Mammary epithelial cell (primary cell): ENCODE measurements at regions of chr4 and their contacts with region 1.

Region 1: DNA sequence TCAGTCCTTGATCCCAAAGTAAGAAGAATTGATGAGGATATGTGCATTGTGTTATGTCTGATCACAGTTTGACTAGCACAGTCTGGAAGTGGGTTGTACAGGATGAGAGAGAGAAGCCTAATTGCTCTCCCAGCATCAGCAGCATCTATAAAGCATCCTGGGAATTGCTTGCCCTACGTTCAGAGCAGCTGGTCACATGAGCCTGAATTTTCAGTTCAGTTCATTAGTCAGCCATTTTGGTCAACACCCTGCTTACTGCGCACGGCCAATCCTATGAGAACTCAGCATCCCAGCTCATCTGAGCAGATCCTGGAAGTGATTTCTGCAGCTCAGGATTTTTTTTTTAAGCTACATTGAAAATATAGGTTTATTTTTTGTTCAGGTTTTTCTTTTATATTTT is at the start of gene RUFY3:
- DNase-seq: no peak
- H3K4me3 ChIP-seq: no peak within 1 kb of the TSS
- H3K27ac ChIP-seq: no peak within 1 kb of the TSS
- H3K4me1 ChIP-seq: peaks cover 13% of the 10 kb centered on the region
- H3K27me3 ChIP-seq: no peaks in the 10 kb centered on the region
- CTCF ChIP-seq: no peak
- total RNA-seq, gene RUFY3: 36.2 to 40.1 TPM

Region 2: DNA sequence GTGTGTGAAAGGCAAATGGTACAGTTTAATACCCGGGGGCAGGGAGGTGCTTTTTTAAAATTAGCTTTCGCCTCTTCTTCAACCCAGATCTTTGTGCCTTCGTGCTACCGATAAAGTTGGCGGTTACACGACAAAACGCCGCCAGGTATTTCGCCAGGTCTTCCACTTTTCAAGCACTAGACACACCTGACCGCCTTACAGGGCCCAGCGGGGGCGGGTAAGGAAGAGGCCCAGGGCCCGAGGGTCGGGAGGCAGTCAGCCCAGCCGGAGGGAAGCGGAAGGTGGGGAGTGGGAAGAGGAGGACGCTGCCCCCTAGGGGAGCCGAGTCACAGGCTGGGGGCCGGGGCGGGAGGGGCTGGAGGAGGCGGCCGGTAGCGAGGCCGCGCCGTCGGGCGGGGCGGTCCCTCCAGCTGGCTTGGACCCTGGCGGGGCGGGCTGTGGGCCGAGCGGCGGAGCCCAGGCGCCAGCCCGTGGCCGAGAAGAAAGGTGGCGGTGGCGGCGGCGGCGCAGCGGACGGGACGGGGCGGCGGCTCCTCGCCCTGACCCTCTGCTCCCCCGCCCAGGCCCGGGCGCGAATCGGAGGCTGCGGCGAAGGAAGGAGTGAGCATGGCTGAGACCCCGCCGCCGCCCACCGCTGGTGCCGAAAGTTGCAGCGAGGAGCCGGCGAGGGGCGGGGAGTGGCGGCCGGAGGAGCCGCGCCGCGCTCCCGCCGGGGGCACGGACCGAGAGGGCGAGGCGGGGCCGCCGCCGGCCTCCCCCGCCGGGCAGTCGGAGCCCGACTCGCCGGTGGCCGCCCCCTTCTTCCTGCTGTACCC is 17.2 kb before region 1 on chr4:
- CTCF ChIA-PET with region 1: no interaction called
- dilution Hi-C with region 1: no loop called
- in situ Hi-C with region 1: no loop called
- intact Hi-C with region 1: loop called (anchors 2 kb)
- DNase-seq: peak; percentile 56
- H3K4me3 ChIP-seq: peak overlapping the region; percentile 67 to 83 (median 73)
- H3K27ac ChIP-seq: peak overlapping the region; percentile 73
- H3K4me1 ChIP-seq: peaks cover 27% of the 10 kb centered on the region
- H3K27me3 ChIP-seq: no peaks in the 10 kb centered on the region
- CTCF ChIP-seq: peak in 1 of 2 donors; percentile 43

Region 3: DNA sequence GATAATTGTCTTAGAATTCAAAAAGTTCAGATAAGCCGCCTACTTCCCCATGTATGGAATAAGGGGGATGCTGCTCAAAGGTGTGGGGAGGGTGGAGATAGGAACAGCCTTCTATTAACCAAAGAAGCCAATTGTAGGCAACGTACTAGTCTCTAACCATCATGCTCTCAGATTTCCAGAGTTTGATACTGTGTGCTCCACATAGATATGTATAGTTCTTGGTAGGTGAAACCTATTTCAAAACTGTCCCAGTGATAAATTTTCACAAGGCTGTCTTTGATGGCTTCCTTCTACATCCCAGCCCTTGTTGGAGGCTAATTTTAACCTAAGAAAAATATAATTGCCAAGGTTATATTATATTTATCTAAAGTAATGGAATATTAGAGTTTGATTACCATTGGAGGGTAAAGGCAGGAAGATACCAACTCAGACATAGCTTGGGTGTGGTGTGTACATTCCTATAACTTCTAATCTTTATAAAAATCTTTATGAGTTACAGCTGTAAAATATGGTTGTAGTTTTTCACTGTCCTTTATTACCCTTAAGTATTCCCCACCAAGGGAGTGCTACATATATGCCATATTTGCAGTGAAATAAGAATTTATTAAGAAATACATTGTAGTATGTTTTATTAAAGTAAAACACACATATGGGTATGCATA is 704.8 kb after region 1 on chr4:
- CTCF ChIA-PET with region 1: no interaction called
- dilution Hi-C with region 1: no loop called
- in situ Hi-C with region 1: no loop called
- intact Hi-C with region 1: no loop called
- DNase-seq: no peak
- H3K4me3 ChIP-seq: no peak overlapping the region
- H3K27ac ChIP-seq: no peak overlapping the region
- H3K4me1 ChIP-seq: no peaks in the 10 kb centered on the region
- H3K27me3 ChIP-seq: no peaks in the 10 kb centered on the region
- CTCF ChIP-seq: no peak